ENCODE measurements at regions of chr1 and their contacts with region 1.

Region 1: GRCh38 chr1:113394043-113394862 is 3.9 kb downstream of the MAGI3 start:
- DNase-seq: no peak
- H3K27ac ChIP-seq: no peak overlapping the region
- CTCF ChIP-seq: no peak

Region 2: DNA sequence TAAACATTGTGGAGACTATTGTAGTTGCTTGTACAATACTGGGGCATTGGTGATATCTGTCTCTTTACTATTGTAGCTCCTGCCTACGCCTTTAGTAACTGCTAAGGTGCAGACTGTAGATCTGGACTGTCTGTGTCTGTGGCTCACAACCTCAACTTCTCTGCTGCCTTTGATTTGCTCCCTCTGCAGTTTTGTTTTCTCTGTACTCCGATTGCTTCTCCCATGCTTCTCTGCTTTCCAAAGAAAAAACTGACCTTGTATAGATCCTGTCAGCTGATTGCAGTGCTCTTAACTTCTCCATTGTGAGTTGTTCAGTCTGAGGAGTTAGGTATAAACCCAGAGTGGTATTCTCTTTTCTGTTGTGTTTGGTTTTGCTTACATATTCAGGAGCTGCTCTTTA is 11.3 kb after region 1 on chr1:
- CTCF ChIA-PET with region 1: no interaction called
- POLR2A ChIA-PET with region 1: no interaction called
- DNase-seq: no peak
- H3K27ac ChIP-seq: no peak overlapping the region
- CTCF ChIP-seq: no peak

Region 3: GRCh38 chr1:113677250-113678158 is 283.3 kb after region 1 on chr1:
- CTCF ChIA-PET with region 1: no interaction called
- POLR2A ChIA-PET with region 1: interaction called, 14 read pairs
- DNase-seq: peak; percentile 56
- H3K27ac ChIP-seq: no peak overlapping the region
- CTCF ChIP-seq: peak; percentile 61

Measured in RWPE1 (cell line).